Calu3 (cell line): ENCODE measurements at regions of chr4 and their contacts with region 1.

Region 1: DNA sequence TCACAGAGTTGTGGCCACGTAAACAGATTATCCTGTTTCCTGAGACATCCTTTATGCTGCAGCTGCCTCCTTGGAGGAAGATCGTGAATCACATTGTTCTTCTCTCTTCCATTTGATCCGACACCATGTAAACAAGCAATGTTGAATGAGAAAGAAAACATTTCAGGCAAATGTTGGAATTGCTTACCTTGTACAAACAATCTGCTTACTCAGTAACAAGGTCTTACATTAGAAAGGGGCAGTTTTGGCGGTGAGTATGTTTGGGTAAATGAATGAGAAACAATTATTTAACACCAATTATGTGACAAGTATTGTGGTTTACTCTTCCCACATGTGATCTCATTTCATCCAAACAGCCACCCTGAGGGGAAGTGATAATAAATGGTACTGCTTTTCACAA is 637.8 kb downstream of the RAB28 start:
- DNase-seq: no peak
- H3K4me3 Mint-ChIP-seq: no peak overlapping the region
- H3K27ac Mint-ChIP-seq: no peak overlapping the region
- H3K4me1 Mint-ChIP-seq: no peaks in the 10 kb centered on the region
- H3K27me3 Mint-ChIP-seq: peaks cover 13% of the 10 kb centered on the region
- CTCF ChIP-seq: no peak

Region 2: DNA sequence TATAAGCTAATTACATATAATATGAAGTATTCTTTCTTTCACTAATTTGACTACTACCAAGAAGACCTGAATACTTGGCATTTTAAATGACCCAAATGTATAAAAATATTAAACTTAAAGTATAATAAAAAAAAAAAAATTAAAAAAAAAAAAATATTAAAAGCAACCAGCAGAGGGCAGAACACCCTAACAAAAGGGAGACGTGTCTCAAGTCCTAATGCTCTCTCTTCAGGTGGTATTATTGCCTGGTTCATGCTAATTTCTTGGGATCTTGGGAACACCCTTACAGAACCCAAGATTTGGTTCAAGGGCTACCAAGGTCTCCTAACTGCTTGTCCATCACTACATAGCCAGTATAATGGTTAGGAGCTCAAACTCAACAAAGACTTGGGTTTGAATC is 117.0 kb before region 1 on chr4:
- CTCF ChIA-PET with region 1: no interaction called
- intact Hi-C with region 1: loop called (anchors 10 kb)
- DNase-seq: no peak
- H3K4me3 Mint-ChIP-seq: no peak overlapping the region
- H3K27ac Mint-ChIP-seq: no peak overlapping the region
- H3K4me1 Mint-ChIP-seq: no peaks in the 10 kb centered on the region
- H3K27me3 Mint-ChIP-seq: peaks cover 15% of the 10 kb centered on the region
- CTCF ChIP-seq: no peak